ENCODE measurements at regions of chr2 and their contacts with region 1.

Region 1: DNA sequence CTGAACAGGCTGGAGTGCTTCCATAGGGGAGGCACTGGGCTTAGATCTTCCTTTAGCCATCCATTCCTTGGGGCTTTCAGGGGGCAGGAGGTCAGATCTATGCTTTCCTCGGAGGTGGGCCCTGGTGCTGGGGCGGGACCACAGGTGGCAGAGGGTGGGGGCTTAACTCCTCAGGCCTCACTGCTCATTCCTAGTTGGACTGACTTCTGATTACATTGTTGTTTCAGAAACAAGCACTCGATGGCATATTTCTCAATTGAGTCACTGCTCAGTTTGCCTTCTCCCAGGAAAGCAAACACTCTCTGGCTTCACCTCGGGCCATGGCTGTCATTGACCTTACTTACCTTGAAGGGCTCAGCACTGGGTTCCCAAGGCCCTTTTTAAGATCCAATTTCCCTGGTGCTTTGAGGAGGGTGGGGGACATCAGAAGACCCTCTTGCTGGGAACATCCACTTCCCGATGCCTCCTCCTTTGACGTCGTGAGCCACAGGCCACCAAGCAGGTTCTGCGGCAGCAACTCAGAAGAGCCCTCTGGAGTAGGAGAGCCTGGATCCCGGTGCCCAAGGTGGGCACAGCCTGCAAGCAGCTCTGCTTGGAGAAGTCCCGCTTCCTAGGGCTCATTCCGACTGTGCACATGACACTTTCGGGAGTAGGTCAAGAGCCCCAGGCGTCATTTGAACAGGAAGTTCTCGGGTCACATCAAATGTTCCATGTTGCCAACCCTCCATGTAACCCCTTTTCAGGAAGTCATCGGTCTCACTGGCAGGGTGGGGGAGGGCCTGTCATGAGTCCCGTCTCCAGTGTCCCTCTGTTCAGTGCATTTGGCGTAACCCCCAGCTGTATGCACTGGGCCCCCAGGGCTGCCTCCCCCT is 40.6 kb downstream of the SDC1 start:
- DNase-seq: peak; percentile 76
- H3K4me3 Mint-ChIP-seq: no peak overlapping the region
- H3K27ac Mint-ChIP-seq: peak overlapping the region; percentile 28
- H3K4me1 Mint-ChIP-seq: peaks cover 28% of the 10 kb centered on the region
- H3K27me3 Mint-ChIP-seq: no peaks in the 10 kb centered on the region
- CTCF ChIP-seq: no peak

Region 2: GRCh38 chr2:20094955-20095354 is 89.3 kb before region 1 on chr2:
- CTCF ChIA-PET with region 1: no interaction called
- POLR2A ChIA-PET with region 1: no interaction called
- intact Hi-C with region 1: no loop called
- DNase-seq: no peak
- H3K4me3 Mint-ChIP-seq: no peak overlapping the region
- H3K27ac Mint-ChIP-seq: no peak overlapping the region
- H3K4me1 Mint-ChIP-seq: peaks cover 47% of the 10 kb centered on the region
- H3K27me3 Mint-ChIP-seq: no peaks in the 10 kb centered on the region
- CTCF ChIP-seq: no peak

Region 3: DNA sequence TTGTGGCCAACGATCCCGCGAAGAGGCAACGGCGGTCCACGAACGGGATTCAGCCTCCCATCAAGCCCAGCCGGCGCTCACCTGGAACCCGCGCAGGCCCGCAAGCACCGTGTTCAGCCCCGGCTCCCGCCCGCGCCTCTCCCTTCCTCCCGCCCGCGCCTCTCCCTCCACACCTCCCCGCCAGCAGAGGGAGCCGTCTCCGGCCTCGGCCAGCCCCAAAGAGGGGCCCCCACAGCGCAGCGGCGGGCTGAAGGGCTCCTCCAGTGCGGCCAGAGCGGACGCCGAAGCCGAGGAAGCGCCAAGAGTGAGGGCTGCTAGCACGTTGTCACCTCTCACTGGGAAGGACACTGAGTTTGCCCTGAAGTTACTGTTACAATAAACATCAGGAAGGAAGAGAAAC is 77.6 kb before region 1 on chr2:
- CTCF ChIA-PET with region 1: interaction called, 27 read pairs
- POLR2A ChIA-PET with region 1: interaction called, 7 read pairs
- intact Hi-C with region 1: no loop called
- DNase-seq: peak; percentile 45
- H3K4me3 Mint-ChIP-seq: peak overlapping the region; percentile 68
- H3K27ac Mint-ChIP-seq: peak overlapping the region; percentile 40
- H3K4me1 Mint-ChIP-seq: peaks cover 17% of the 10 kb centered on the region
- H3K27me3 Mint-ChIP-seq: no peaks in the 10 kb centered on the region
- CTCF ChIP-seq: peak; percentile 40

Region 4: DNA sequence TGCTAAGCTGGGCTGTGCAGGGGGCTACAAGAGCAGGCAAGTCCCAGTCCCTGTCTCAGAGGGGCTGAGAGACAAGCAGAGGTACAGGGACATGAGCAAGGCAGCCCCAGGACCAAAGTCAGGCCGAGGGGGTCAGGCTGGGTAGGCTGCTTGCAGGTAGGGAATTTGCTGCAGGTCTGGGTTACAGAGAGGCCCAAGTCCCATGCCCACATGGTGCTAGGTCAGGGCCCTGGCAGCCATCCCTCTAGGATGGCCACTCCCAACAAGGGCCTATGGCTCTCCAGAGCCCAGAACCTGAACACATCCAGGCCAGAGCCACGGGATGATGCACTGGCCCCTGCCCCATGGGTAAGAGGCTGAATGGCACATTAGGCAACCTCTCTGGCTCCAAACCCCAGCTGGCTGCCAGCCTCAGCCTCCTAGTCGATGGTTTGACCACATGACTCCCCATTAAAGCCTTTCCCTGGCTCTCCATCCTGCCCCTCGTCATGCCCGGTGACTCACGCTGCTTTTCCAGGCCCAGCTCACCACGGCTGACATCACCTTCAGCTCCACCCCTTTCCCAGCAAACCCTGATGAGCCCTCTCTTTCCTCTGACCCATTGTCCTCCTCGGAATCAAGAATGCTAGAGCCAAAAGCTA is 43.1 kb before region 1 on chr2:
- CTCF ChIA-PET with region 1: interaction called, 31 read pairs
- POLR2A ChIA-PET with region 1: interaction called, 9 read pairs
- intact Hi-C with region 1: loop called (anchors 2 kb)
- DNase-seq: peak; percentile 99
- H3K4me3 Mint-ChIP-seq: no peak overlapping the region
- H3K27ac Mint-ChIP-seq: peak overlapping the region; percentile 77
- H3K4me1 Mint-ChIP-seq: peaks cover 35% of the 10 kb centered on the region
- H3K27me3 Mint-ChIP-seq: no peaks in the 10 kb centered on the region
- CTCF ChIP-seq: no peak

Region 5: GRCh38 chr2:20212459-20212870 is 28.2 kb after region 1 on chr2:
- CTCF ChIA-PET with region 1: interaction called, 46 read pairs
- POLR2A ChIA-PET with region 1: interaction called, 33 read pairs
- intact Hi-C with region 1: loop called (anchors 1 kb)
- DNase-seq: peak; percentile 90
- H3K4me3 Mint-ChIP-seq: peak overlapping the region; percentile 59
- H3K27ac Mint-ChIP-seq: peak overlapping the region; percentile 88
- H3K4me1 Mint-ChIP-seq: peaks cover 73% of the 10 kb centered on the region
- H3K27me3 Mint-ChIP-seq: no peaks in the 10 kb centered on the region
- CTCF ChIP-seq: no peak

Region 6: DNA sequence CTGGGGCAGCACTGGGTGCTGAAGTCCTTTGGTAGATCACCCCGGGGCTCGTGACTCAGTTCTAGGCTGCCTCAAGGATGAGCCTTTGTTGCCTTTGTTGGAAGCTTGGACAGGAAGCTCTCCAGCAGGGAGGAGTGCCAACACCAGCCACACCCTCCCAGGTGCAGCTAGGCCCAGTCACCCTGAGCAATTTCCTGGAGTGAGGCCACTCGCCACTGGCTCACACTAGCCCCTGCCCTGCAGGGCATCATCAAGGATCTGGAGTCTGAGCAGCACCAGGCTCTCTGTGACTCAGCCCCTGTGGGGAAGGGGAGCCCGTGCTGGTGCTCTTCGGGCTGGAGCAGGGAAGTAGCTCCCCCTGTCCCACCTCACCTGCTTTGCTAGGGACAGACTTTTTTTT is 47.3 kb after region 1 on chr2:
- CTCF ChIA-PET with region 1: interaction called, 57 read pairs
- POLR2A ChIA-PET with region 1: interaction called, 16 read pairs
- intact Hi-C with region 1: no loop called
- DNase-seq: peak; percentile 99
- H3K4me3 Mint-ChIP-seq: peak overlapping the region; percentile 43
- H3K27ac Mint-ChIP-seq: peak overlapping the region; percentile 81
- H3K4me1 Mint-ChIP-seq: peaks cover 46% of the 10 kb centered on the region
- H3K27me3 Mint-ChIP-seq: no peaks in the 10 kb centered on the region
- CTCF ChIP-seq: no peak

Region 7: GRCh38 chr2:20291106-20291564 is 106.8 kb after region 1 on chr2:
- CTCF ChIA-PET with region 1: interaction called, 9 read pairs
- POLR2A ChIA-PET with region 1: interaction called, 3 read pairs
- intact Hi-C with region 1: loop called (anchors 1 kb)
- DNase-seq: peak; percentile 88
- H3K4me3 Mint-ChIP-seq: no peak overlapping the region
- H3K27ac Mint-ChIP-seq: peak overlapping the region; percentile 9
- H3K4me1 Mint-ChIP-seq: peaks cover 6% of the 10 kb centered on the region
- H3K27me3 Mint-ChIP-seq: no peaks in the 10 kb centered on the region
- CTCF ChIP-seq: peak; percentile 64

Region 8: DNA sequence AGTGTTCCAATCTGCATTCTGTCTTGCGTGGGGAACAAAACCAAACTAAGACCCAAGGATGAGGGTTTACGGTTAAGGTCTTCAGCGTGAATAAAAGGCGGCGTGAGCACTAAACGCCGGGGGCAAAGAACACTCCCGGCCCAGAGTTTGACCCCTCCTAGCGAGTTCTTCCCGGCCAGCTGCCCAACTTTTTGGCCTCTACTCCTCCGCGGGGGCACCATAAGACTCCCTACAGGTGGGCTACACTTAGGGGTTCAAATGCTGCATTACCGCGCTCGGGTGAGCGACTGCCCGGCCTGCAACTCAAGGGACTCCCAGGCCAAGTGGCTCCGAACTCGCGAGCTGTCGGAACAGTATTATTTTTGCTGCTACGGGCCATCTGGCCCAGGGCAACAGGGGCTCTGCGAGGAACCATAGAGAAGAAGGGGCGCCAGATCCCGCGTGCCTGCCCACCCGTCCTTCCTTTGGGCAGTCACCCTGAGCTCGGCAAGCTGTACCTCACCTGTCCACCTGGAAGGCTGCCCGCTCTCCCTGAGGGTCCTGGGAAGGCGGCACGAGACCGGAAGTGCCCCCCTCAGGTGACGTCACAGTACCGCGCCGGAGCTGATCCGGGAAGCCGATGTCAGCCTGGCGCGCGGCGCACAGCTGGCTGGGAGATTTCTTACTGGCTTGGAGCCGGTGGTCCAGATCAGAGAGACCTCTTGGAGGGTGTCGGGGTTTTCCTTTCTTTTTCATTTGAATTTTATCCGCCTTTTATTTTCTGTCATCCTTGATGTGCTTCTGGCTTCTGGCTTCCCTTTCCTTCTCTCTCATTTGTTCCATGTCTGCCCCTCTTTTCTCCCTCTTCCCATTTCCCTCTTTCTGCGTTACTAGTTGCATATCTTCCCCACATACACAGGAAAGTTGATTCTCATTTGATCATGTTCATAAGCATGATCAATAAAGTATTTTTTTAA is 638.5 kb after region 1 on chr2 and contains the start of gene LDAH:
- CTCF ChIA-PET with region 1: no interaction called
- POLR2A ChIA-PET with region 1: no interaction called
- intact Hi-C with region 1: no loop called
- DNase-seq: peak; percentile 80
- H3K4me3 Mint-ChIP-seq: peak within 1 kb of the TSS; percentile 94
- H3K27ac Mint-ChIP-seq: peak within 1 kb of the TSS; percentile 99
- H3K4me1 Mint-ChIP-seq: peaks cover 6% of the 10 kb centered on the region
- H3K27me3 Mint-ChIP-seq: no peaks in the 10 kb centered on the region
- CTCF ChIP-seq: no peak
- total RNA-seq, gene LDAH: 16.8 and 17.0 TPM in 2 replicates

Measured in MCF 10A (cell line).